Panc1 (cell line): ENCODE measurements at regions of chr18 and their contacts with region 1.

Region 1: GRCh38 chr18:765764-766549 is 46.1 kb downstream of the YES1 start:
- DNase-seq: no peak
- ATAC-seq: no peak
- H3K4me3 ChIP-seq: no peak overlapping the region
- H3K27ac ChIP-seq: no peak overlapping the region
- H3K4me1 ChIP-seq: 0 out of 2 replicates have a peak, but pooled peaks cover 6% of the 10 kb centered on the region
- H3K27me3 ChIP-seq: no peaks in the 10 kb centered on the region
- CTCF ChIP-seq: no peak

Region 2: GRCh38 chr18:801137-801536 is 35.2 kb after region 1 on chr18:
- CTCF ChIA-PET with region 1: interaction called, 3 read pairs
- POLR2A ChIA-PET with region 1: no interaction called
- in situ Hi-C with region 1: no loop called
- intact Hi-C with region 1: loop called (anchors 5 kb)
- DNase-seq: no peak
- ATAC-seq: no peak
- H3K4me3 ChIP-seq: no peak overlapping the region
- H3K27ac ChIP-seq: no peak overlapping the region
- H3K4me1 ChIP-seq: peaks cover 11% of the 10 kb centered on the region
- H3K27me3 ChIP-seq: no peaks in the 10 kb centered on the region
- CTCF ChIP-seq: no peak